HCT116 (cell line): ENCODE measurements at regions of chr11 and their contacts with region 1.

Region 1: GRCh38 chr11:122202951-122203456 is 87.0 kb upstream of the BLID start:
- DNase-seq: peak; percentile 81
- ATAC-seq: peak; percentile 82
- H3K4me3 ChIP-seq: peak overlapping the region; percentile 56 to 79
- H3K27ac ChIP-seq: peak overlapping the region; percentile 97
- H3K4me1 ChIP-seq: peaks cover 72 to 90% of the 10 kb centered on the region in 2 experiments
- H3K27me3 ChIP-seq: no peaks in the 10 kb centered on the region
- CTCF ChIP-seq: peak in 2 of 3 experiments; percentile 98 to 99; a peak in 4 of 6 replicates
- POLR2A ChIP-seq: peak; percentile 44
- RAD21 ChIP-seq: no peak

Region 2: DNA sequence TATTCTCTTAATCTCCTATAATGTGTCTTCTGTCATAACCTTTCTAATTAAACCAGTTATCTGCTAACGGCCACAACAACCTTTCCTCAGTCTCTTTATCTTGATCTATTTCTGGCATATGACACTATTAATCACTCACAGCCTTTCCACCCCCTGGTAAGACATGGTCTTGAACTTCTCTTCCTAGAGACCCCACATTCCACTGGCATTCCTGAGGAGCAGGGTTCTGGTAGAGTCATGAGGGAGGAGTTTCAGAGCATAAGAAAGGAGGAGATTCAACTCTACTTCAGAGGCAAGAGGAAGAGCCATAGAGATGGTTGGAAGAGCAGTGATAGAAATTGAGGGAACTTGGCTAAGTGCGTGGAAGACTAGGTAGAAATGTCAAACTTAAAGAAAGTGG is 412.6 kb before region 1 on chr11:
- CTCF ChIA-PET with region 1: no interaction called
- POLR2A ChIA-PET with region 1: no interaction called
- RAD21 ChIA-PET with region 1: no interaction called
- intact Hi-C with region 1: no loop called
- DNase-seq: no peak
- ATAC-seq: no peak
- H3K4me3 ChIP-seq: no peak overlapping the region
- H3K27ac ChIP-seq: no peak overlapping the region
- H3K4me1 ChIP-seq: no peaks in the 10 kb centered on the region
- H3K27me3 ChIP-seq: no peaks in the 10 kb centered on the region
- CTCF ChIP-seq: no peak
- POLR2A ChIP-seq: no peak
- RAD21 ChIP-seq: no peak

Region 3: DNA sequence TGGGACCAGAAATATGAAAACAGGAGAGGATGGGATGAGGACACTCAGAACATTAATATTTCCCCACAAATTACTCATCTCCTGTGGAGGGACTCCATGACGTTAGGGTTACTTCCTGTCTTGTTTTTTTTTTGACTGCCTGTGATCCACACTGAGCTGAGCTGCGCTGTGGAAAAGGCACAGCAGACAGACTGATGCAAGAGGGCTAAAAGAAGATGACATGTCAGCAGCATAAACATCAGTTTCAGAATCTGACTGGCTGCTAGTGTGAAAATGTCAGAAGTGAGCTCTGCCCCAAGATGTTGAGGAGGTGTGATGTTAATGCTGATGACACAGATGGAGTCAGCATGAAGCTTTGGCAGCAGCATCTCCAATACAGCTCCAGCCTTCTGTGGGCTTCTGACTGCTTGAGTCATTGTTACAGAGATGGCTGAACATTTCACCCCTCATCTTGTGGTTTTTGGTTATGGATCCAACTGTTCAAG is 373.8 kb before region 1 on chr11:
- CTCF ChIA-PET with region 1: no interaction called
- POLR2A ChIA-PET with region 1: no interaction called
- RAD21 ChIA-PET with region 1: no interaction called
- intact Hi-C with region 1: no loop called
- DNase-seq: peak; percentile 21
- ATAC-seq: no peak
- H3K4me3 ChIP-seq: no peak overlapping the region
- H3K27ac ChIP-seq: no peak overlapping the region
- H3K4me1 ChIP-seq: peaks cover 0 to 10% of the 10 kb centered on the region in 2 experiments; a peak in 2 of 4 replicates
- H3K27me3 ChIP-seq: no peaks in the 10 kb centered on the region
- CTCF ChIP-seq: no peak
- POLR2A ChIP-seq: no peak
- RAD21 ChIP-seq: no peak

Region 4: DNA sequence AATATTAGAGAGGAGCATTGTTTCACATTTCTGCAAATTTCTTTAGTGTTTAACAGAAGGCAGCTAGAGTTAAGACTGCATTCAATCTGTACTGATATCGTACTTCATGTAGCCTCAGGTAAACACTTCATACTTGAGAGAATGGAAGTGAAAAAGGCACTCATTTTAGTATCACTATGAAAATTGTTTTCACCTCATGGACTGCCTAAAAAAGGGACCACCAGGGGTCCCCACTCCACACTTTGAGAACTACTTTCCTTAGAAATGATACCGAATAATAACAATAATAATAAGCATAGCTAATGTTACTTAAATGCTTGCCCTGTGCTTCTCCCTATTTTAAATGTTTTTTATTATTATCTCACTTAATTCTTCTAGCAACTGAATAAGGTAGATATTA is 182.1 kb before region 1 on chr11:
- CTCF ChIA-PET with region 1: no interaction called
- POLR2A ChIA-PET with region 1: no interaction called
- RAD21 ChIA-PET with region 1: no interaction called
- intact Hi-C with region 1: loop called (anchors 2 kb)
- DNase-seq: no peak
- ATAC-seq: no peak
- H3K4me3 ChIP-seq: no peak overlapping the region
- H3K27ac ChIP-seq: no peak overlapping the region
- H3K4me1 ChIP-seq: peaks cover 16 to 36% of the 10 kb centered on the region in 2 experiments; a peak in 3 of 4 replicates
- H3K27me3 ChIP-seq: no peaks in the 10 kb centered on the region
- CTCF ChIP-seq: peak; percentile 4 to 46 (median 40); a peak in 4 of 6 replicates
- POLR2A ChIP-seq: no peak
- RAD21 ChIP-seq: peak; percentile 46

Region 5: DNA sequence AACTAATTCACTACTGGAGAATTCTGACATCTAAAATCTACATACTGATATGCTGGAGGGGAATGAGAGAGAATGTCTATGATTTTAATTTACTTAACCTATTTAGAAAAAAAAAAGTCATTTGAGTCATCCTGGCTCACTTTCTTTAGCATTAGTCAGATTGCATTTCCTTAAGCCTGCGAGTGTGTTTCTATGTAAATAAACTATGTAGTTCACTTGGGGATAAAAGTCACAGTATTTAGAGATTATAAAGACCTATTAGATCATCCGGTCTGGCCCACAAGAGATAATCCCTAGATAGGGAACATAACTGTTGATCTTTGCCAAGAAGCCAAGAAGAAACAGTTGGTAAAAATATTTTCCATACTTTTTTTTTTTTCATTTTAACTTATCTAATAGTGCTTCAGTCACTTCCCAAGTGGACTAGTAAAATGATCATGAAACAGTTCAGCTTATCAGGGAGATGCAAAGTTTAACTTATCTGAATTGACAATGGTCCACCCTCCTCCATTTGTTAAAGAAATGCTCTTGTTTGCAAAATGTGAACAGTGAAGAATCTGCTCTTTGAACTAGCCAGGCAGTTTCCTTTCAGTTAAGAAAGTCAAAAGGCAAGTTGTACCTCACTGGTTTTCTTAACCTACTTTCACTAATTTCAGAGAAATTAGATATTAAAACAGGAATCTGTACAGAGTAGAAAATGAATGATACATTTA is 65.8 kb before region 1 on chr11:
- CTCF ChIA-PET with region 1: interaction called, 3 read pairs
- POLR2A ChIA-PET with region 1: no interaction called
- RAD21 ChIA-PET with region 1: no interaction called
- intact Hi-C with region 1: loop called (anchors 5 kb)
- DNase-seq: peak; percentile 79
- ATAC-seq: peak; percentile 37
- H3K4me3 ChIP-seq: no peak overlapping the region; a peak in 1 of 4 replicates
- H3K27ac ChIP-seq: peak overlapping the region; percentile 95
- H3K4me1 ChIP-seq: peaks cover 93 to 100% of the 10 kb centered on the region in 2 experiments
- H3K27me3 ChIP-seq: no peaks in the 10 kb centered on the region
- CTCF ChIP-seq: no peak
- POLR2A ChIP-seq: no peak
- RAD21 ChIP-seq: no peak; the same call in 1 of the 2 replicates

Region 6: GRCh38 chr11:122179961-122180834 is 22.8 kb before region 1 on chr11:
- CTCF ChIA-PET with region 1: interaction called, 10 read pairs
- POLR2A ChIA-PET with region 1: interaction called, 7 read pairs
- RAD21 ChIA-PET with region 1: no interaction called
- intact Hi-C with region 1: no loop called
- DNase-seq: peak; percentile 92
- ATAC-seq: peak; percentile 84
- H3K4me3 ChIP-seq: peak overlapping the region; percentile 10 to 35; a peak in 3 of 4 replicates
- H3K27ac ChIP-seq: peak overlapping the region; percentile 97
- H3K4me1 ChIP-seq: peaks cover 79 to 100% of the 10 kb centered on the region in 2 experiments
- H3K27me3 ChIP-seq: no peaks in the 10 kb centered on the region
- CTCF ChIP-seq: no peak
- POLR2A ChIP-seq: no peak
- RAD21 ChIP-seq: peak; percentile 47; the same call in 1 of the 2 replicates

Region 7: GRCh38 chr11:122215244-122215992 is 12.4 kb after region 1 on chr11:
- CTCF ChIA-PET with region 1: interaction called, 18 read pairs
- POLR2A ChIA-PET with region 1: no interaction called
- RAD21 ChIA-PET with region 1: no interaction called
- intact Hi-C with region 1: no loop called
- DNase-seq: peak; percentile 51
- ATAC-seq: peak; percentile 98
- H3K4me3 ChIP-seq: no peak overlapping the region
- H3K27ac ChIP-seq: 0 out of 2 replicates have a peak overlapping the region, but pooled peaks have one; percentile 0
- H3K4me1 ChIP-seq: peaks cover 13 to 18% of the 10 kb centered on the region in 2 experiments; a peak in 3 of 4 replicates
- H3K27me3 ChIP-seq: no peaks in the 10 kb centered on the region
- CTCF ChIP-seq: peak; percentile 71 to 94 (median 91); a peak in 5 of 6 replicates
- POLR2A ChIP-seq: no peak
- RAD21 ChIP-seq: peak; percentile 81